ENCODE measurements at regions of chr18 and their contacts with region 1.

Region 1: GRCh38 chr18:23380001-23380550 is 73.0 kb upstream of the RIOK3 start:
- DNase-seq: no peak
- H3K4me3 ChIP-seq: no peak overlapping the region
- H3K27ac ChIP-seq: no peak overlapping the region
- H3K4me1 ChIP-seq: no peaks in the 10 kb centered on the region
- H3K27me3 ChIP-seq: no peaks in the 10 kb centered on the region
- CTCF ChIP-seq: no peak

Region 2: DNA sequence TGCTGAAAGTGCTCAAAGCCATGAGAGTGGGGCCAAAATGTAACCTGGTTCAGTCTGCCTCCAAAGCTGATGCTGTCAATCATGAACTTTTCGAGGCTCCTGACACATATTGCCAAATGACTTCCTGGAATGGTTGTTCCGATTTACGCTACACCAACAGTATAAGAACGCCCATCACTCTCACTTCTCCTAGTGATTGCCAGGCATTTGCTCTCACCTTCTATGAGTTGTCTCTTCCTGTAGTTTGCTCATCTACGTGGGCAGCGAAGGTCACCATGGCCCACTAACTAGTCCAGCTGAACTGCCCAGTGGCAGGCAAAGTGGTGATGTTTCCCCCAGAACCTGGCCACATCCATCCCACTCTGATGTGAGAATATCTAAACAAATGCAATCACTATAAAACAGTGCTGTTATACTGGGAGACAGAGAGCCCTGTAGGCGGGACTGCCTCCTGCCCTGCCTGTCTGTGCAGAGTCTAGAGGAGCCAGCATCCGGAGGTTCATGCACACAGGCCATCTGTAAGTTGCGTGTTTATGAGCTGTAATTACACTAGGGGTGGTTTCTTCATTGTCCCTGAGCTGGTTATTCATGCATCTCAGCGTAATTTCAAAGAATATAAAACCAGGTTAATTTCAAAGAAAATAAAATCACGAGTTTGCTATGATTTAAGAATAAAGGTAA is 253.6 kb before region 1 on chr18:
- intact Hi-C with region 1: loop called (anchors 10 kb)
- DNase-seq: no peak
- H3K4me3 ChIP-seq: no peak overlapping the region
- H3K27ac ChIP-seq: no peak overlapping the region
- H3K4me1 ChIP-seq: peaks cover 0 to 7% (median 6%) of the 10 kb centered on the region in 3 donors
- H3K27me3 ChIP-seq: no peaks in the 10 kb centered on the region
- CTCF ChIP-seq: no peak

Region 3: GRCh38 chr18:24346254-24346653 is 966.2 kb after region 1 on chr18:
- intact Hi-C with region 1: no loop called
- DNase-seq: no peak
- H3K4me3 ChIP-seq: no peak overlapping the region
- H3K27ac ChIP-seq: no peak overlapping the region
- H3K4me1 ChIP-seq: no peaks in the 10 kb centered on the region
- H3K27me3 ChIP-seq: no peaks in the 10 kb centered on the region
- CTCF ChIP-seq: no peak

Measured in kidney (tissue), 22 donors.